ENCODE measurements at regions of chr14 and their contacts with region 1.

Region 1: DNA sequence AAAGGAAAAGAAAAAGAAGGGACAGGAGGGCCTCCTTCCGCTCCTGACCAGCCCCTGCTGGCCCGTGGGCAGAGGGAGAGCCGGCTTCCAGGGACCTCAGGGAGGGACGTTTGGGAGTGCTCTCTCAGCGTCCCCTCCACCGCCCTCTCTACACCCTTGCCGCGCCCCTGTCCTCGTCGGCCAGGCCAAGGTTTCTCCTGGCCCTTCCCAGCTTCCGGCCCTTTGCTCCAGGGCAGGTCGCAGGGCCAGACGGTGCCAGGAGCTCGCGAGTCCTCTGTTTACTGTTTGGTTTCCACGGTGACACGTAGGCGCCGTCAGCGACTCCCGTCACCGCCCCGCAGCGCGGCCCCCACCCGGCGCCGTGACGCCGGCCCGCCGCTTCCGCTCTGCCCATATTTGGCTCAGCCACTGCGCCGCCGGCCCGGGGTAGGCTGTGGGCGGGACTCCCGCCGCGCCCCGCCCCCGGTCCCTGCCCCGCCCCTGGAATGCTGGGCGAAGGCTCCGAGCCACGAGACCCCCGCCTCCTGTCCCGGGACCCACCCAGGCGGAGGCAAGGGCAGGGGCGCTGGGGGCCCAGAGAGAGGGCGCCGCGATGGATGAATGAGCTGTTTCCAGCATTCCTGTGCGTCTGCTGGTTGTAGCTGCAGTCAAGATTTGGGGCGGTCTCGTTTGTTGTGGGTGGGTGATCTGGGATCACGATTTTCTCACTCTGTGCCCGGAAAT is 15.5 kb downstream of the FOS start:
- DNase-seq: peak; percentile 95 to 99
- ATAC-seq: peak; percentile 79 to 95 (median 86)
- H3K4me3 ChIP-seq: peak overlapping the region; percentile 66
- H3K4me3 Mint-ChIP-seq: peak overlapping the region; percentile 98
- H3K27ac ChIP-seq: peak overlapping the region; percentile 94
- H3K27ac Mint-ChIP-seq: peak overlapping the region; percentile 89 to 96
- H3K4me1 ChIP-seq: peaks cover 33% of the 10 kb centered on the region
- H3K4me1 Mint-ChIP-seq: peaks cover 11 to 19% of the 10 kb centered on the region in 2 donors
- H3K27me3 ChIP-seq: no peaks in the 10 kb centered on the region
- H3K27me3 Mint-ChIP-seq: peaks cover 8 to 9% of the 10 kb centered on the region in 2 donors
- CTCF ChIP-seq: no peak

Region 2: GRCh38 chr14:75182841-75183624 is 111.0 kb before region 1 on chr14:
- intact Hi-C with region 1: no loop called
- DNase-seq: no peak
- ATAC-seq: no peak
- H3K4me3 ChIP-seq: no peak overlapping the region
- H3K4me3 Mint-ChIP-seq: no peak overlapping the region
- H3K27ac ChIP-seq: no peak overlapping the region
- H3K27ac Mint-ChIP-seq: no peak overlapping the region
- H3K4me1 ChIP-seq: peaks cover 3% of the 10 kb centered on the region
- H3K4me1 Mint-ChIP-seq: no peaks in the 10 kb centered on the region
- H3K27me3 ChIP-seq: no peaks in the 10 kb centered on the region
- H3K27me3 Mint-ChIP-seq: peaks cover 3 to 9% of the 10 kb centered on the region in 2 donors
- CTCF ChIP-seq: no peak

Region 3: DNA sequence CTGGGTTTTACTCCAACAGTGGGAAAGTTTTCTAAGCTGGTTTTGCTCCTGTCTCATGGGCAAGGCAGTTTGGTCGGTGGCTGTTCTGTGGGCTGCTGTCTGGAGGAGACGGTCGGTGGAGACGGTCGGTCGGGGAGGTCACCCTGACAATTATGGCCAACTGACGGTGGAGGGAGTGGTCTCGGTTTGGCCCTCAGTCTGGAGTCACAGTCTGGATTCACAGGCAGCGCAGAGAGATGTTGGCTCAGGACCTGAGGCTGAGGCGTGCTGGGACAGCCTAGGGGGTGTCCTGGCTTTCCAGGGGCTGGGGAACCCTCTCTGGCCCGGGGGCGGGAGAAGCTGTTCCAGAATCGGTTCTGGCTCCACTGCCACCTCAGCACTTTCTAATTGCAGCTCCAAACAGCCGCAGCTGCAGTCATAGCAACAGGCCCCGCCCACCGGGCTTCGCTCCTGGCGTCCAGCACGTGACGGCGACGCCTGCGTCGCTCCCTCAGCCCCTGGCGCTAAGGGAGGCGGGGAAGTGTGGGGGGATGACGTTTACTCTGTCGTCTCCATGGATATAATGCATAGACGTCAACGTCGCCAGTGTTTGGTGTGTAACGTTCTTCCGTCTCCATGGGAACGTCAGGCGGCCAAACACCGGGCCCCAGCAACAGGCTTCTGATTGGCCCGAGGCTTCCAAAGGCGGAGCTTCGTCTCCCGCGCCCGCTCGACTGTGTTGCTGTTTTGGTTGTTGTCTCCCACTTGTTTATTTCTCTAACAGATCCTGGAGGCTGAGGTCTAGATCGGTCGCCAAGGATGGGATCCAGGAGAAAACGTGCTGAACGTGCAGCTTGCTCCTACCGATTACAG is 35.2 kb before region 1 on chr14:
- intact Hi-C with region 1: loop called (anchors 1 kb)
- DNase-seq: peak; percentile 100
- ATAC-seq: peak; percentile 85 to 97 (median 90)
- H3K4me3 ChIP-seq: peak overlapping the region; percentile 46
- H3K4me3 Mint-ChIP-seq: peak overlapping the region; percentile 83
- H3K27ac ChIP-seq: peak overlapping the region; percentile 93
- H3K27ac Mint-ChIP-seq: peak overlapping the region; percentile 99
- H3K4me1 ChIP-seq: peaks cover 11% of the 10 kb centered on the region
- H3K4me1 Mint-ChIP-seq: peaks cover 23 to 34% of the 10 kb centered on the region in 2 donors
- H3K27me3 ChIP-seq: no peaks in the 10 kb centered on the region
- H3K27me3 Mint-ChIP-seq: no peaks in the 10 kb centered on the region
- CTCF ChIP-seq: no peak

Region 4: DNA sequence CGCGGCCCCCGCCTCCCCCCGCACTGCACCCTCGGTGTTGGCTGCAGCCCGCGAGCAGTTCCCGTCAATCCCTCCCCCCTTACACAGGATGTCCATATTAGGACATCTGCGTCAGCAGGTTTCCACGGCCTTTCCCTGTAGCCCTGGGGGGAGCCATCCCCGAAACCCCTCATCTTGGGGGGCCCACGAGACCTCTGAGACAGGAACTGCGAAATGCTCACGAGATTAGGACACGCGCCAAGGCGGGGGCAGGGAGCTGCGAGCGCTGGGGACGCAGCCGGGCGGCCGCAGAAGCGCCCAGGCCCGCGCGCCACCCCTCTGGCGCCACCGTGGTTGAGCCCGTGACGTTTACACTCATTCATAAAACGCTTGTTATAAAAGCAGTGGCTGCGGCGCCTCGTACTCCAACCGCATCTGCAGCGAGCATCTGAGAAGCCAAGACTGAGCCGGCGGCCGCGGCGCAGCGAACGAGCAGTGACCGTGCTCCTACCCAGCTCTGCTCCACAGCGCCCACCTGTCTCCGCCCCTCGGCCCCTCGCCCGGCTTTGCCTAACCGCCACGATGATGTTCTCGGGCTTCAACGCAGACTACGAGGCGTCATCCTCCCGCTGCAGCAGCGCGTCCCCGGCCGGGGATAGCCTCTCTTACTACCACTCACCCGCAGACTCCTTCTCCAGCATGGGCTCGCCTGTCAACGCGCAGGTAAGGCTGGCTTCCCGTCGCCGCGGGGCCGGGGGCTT is 15.5 kb before region 1 on chr14 and contains the start of gene FOS:
- intact Hi-C with region 1: loop called (anchors 1 kb)
- DNase-seq: peak; percentile 94 to 97
- ATAC-seq: peak; percentile 62 to 84 (median 71)
- H3K4me3 ChIP-seq: peak within 1 kb of the TSS; percentile 97
- H3K4me3 Mint-ChIP-seq: peak within 1 kb of the TSS; percentile 93
- H3K27ac ChIP-seq: peak within 1 kb of the TSS; percentile 84
- H3K27ac Mint-ChIP-seq: peak within 1 kb of the TSS; percentile 93 to 95
- H3K4me1 ChIP-seq: peaks cover 65% of the 10 kb centered on the region
- H3K4me1 Mint-ChIP-seq: peaks cover 63 to 79% of the 10 kb centered on the region in 2 donors
- H3K27me3 ChIP-seq: peaks cover 21% of the 10 kb centered on the region
- H3K27me3 Mint-ChIP-seq: peaks cover 20 to 26% of the 10 kb centered on the region in 2 donors
- CTCF ChIP-seq: no peak
- total RNA-seq, gene FOS: 2,527 to 3,257 (median 3,104) TPM

Region 5: DNA sequence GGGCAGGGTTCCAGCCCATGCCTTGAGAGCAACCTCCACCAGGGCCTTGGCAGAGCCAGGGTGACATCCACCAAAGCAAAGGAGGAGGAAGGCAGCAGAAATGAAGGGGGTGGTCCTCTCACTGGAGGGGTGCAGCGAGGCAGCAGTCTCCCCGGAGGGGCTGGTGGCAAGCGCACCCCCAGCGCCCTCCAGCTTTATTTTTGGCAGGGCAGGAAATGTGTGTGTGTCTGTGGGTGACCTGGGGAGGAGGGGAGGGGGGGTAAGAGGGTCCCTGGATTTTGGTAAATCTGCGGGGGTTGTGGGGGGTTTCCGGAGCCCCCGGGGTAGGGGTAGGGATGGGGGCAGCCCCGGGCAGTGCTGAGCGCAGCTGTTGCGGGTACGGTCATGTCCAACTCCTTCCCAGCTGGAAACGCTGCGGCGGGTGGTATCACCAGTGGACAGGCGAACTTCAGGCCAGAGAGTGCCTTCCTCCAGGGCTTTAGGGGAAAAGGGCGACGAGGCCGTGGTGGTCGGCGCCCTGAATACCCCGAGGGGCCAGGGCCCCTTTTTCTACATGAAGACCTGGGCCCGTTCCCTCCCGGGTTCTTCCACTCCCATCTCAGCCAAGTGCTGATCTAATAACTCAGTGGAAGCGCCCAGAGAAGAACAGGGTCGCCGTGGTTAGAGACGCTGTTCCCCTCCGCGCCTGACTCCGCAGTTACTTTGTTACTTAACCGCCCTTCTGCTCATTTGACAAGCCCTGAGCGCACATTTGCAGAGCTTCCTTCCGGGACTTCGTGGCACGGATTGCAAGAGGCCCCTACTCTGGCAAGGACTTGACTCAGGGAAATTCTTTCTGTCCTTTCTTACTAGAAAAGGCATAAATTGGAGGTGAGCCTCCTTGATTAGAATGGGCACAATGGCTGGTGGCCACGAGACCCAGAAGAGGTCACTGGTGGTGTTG is 39.8 kb after region 1 on chr14:
- intact Hi-C with region 1: no loop called
- DNase-seq: peak; percentile 28 to 81
- ATAC-seq: peak; percentile 78 to 90 (median 85)
- H3K4me3 ChIP-seq: peak overlapping the region; percentile 40
- H3K4me3 Mint-ChIP-seq: peak overlapping the region; percentile 90
- H3K27ac ChIP-seq: peak overlapping the region; percentile 75
- H3K27ac Mint-ChIP-seq: peak overlapping the region; percentile 56 to 85
- H3K4me1 ChIP-seq: peaks cover 18% of the 10 kb centered on the region
- H3K4me1 Mint-ChIP-seq: peaks cover 22 to 23% of the 10 kb centered on the region in 2 donors
- H3K27me3 ChIP-seq: no peaks in the 10 kb centered on the region
- H3K27me3 Mint-ChIP-seq: peaks cover 12 to 16% of the 10 kb centered on the region in 2 donors
- CTCF ChIP-seq: no peak